GM23248 (cell line): ENCODE measurements at regions of chr15 and their contacts with region 1.

Region 1: DNA sequence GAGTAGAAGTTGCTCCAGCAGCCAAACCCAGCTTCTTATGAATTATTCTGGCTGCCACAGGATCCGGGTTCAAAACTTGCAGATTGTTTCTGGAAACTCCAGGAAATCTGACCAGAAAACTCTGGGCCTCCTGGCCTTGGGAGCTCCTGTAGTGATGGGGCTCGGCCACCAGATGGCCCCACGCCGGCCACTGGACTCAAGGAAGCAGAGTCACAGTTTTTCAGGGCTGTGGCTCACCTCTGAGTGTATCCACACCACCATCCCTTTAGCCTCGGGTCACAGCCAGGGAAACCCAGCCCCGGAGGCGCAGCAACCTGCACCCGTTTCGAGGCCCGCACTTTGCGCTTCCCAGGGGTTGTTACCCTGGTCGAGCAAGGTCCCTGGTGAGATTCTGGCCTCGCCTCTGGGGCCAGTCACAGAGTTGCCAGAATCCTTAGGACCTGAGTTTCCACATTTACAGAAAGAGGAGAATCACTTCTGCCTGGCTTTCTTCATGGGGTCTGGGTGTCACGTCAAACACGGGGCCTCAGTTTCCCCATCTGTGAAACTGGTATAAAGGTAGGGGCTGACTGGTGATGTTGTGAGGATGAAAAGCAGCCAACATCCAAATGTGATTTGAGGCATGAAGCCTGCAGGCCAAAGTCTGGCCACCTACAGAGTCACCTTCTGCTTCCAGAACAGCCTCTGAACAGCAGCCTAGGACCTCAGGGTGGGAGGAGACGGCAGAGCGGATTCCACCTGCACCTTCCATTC is 53.5 kb upstream of the LCTL start:
- DNase-seq: peak; percentile 92
- H3K4me3 ChIP-seq: no peak overlapping the region
- H3K27ac ChIP-seq: no peak overlapping the region
- H3K4me1 ChIP-seq: peaks cover 17% of the 10 kb centered on the region
- H3K27me3 ChIP-seq: no peaks in the 10 kb centered on the region

Region 2: DNA sequence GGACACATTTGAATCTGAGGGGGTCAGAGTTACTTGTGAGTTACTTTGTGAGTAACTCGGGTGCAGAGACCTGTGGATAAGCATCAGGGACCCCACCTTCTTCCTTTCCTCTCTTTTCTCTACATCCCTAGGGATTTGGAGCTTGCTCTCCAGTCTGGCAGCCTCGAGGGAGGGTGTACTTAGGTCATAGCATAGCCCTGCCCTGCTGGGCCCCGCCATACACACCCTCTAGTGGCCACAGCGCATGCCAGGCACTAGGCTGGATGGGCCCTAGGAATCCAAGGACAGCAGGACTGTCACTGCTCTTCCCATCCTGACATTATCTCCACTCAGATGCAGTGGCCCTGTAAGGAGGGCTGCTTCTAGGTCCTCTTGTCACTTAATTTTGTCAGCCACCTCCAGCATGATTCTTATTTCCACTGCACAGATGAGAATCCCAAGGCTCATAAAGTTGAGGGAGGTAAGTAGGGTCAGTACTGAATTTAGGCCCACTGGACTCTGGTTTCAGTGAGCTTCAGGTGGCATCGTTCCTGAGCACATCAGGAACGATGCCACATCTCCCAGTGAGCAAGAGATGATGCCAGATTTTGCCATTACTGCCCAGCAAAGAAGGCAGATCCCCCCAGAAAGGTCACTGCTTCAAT is 79.1 kb after region 1 on chr15:
- in situ Hi-C with region 1: loop called (anchors 10 kb)
- DNase-seq: peak; percentile 95
- H3K4me3 ChIP-seq: no peak overlapping the region
- H3K27ac ChIP-seq: no peak overlapping the region
- H3K4me1 ChIP-seq: 0 out of 2 replicates have a peak, but pooled peaks cover 7% of the 10 kb centered on the region
- H3K27me3 ChIP-seq: no peaks in the 10 kb centered on the region

Region 3: DNA sequence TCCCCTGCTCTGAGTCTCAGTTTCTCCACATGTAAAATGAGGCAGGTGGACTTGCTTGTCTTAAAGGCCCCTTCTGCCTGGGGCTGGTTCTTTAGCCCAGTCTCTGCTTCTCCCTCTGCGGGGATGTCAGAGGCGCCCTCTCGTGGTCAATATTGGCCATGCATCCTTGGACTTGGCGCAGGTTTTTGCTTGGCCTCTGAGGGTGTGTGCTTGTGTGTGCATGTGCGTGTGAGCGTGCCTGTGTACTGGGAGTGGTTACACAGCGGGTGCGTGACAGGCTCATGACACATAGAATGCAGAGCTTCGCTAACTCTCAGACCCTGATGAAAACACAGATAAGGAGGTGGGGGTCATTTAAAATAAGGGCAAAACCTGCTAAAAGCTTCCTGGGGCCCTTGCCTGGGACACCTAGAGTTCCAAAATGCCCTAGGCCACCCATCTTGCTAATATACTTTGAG is 243.6 kb after region 1 on chr15:
- in situ Hi-C with region 1: loop called (anchors 10 kb)
- DNase-seq: peak; percentile 96
- H3K4me3 ChIP-seq: no peak overlapping the region
- H3K27ac ChIP-seq: peak overlapping the region; percentile 62
- H3K4me1 ChIP-seq: peaks cover 47% of the 10 kb centered on the region
- H3K27me3 ChIP-seq: no peaks in the 10 kb centered on the region